ENCODE measurements at regions of chr1 and their contacts with region 1.

Region 1: DNA sequence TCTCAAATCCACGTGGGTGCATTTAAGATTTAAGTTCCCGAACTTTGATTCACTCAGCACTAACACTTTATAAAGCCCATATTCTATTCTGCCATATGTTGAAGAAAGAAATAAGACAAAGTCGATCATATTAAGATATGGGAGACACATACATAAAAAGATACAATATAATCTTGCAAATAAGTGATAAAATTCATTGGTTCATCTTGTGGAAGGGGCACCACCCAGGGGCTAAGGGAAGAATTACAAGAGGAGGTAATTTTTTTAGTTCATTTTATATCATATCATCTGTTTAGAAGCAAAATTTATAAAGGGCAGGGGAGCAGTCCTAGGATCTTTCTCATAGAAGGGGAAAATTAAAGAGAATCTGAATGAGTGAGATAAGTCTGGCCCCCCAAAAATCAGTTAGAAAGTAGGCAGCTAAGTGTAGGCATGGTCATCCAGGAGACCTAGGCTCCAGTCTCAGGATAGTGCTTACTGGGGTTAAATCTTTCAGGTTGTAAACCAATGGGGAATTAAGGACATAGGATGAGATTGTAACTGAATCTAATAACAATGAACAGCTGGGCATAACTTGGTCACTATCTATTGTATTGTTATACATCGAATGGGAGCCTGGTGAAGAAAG is 124.2 kb upstream of the L1TD1 start:
- DNase-seq: peak; percentile 47
- ATAC-seq: peak; percentile 35; the same call in 1 of the 2 replicates
- H3K4me3 ChIP-seq: no peak overlapping the region
- H3K27ac ChIP-seq: no peak overlapping the region
- H3K4me1 ChIP-seq: no peaks in the 10 kb centered on the region
- H3K27me3 ChIP-seq: no peaks in the 10 kb centered on the region
- CTCF ChIP-seq: peak; percentile 79

Region 2: GRCh38 chr1:60969971-60970509 is 1100.5 kb before region 1 on chr1:
- CTCF ChIA-PET with region 1: no interaction called
- POLR2A ChIA-PET with region 1: no interaction called
- intact Hi-C with region 1: loop called (anchors 5 kb)
- DNase-seq: peak; percentile 48
- ATAC-seq: peak; percentile 70
- H3K4me3 ChIP-seq: no peak overlapping the region
- H3K27ac ChIP-seq: no peak overlapping the region
- H3K4me1 ChIP-seq: peaks cover 11% of the 10 kb centered on the region
- H3K27me3 ChIP-seq: no peaks in the 10 kb centered on the region
- CTCF ChIP-seq: peak; percentile 69

Region 3: DNA sequence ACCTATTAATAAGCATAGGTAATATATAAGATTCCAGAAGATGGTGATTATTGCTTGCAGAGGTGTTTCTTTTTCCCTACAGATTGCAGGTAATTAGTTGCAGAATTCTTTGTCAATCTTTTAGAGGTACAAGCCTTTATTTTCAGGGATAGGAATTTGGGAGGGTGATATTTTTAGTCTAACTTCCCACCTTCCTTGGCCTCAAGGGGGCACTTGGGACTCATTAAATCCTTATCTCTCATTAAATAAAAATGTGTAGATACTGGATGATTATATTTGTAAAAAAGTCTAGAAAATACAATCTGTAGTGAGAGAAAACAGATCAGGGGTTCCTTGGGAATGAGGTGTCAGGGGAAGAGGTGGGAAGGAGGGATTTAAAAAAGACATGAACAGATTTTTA is 149.1 kb before region 1 on chr1:
- CTCF ChIA-PET with region 1: no interaction called
- POLR2A ChIA-PET with region 1: no interaction called
- intact Hi-C with region 1: loop called (anchors 1 kb)
- DNase-seq: peak; percentile 3
- ATAC-seq: no peak
- H3K4me3 ChIP-seq: no peak overlapping the region
- H3K27ac ChIP-seq: no peak overlapping the region
- H3K4me1 ChIP-seq: peaks cover 13% of the 10 kb centered on the region
- H3K27me3 ChIP-seq: no peaks in the 10 kb centered on the region
- CTCF ChIP-seq: peak; percentile 54

Region 4: GRCh38 chr1:61950418-61950817 is 120.1 kb before region 1 on chr1:
- CTCF ChIA-PET with region 1: no interaction called
- POLR2A ChIA-PET with region 1: no interaction called
- intact Hi-C with region 1: loop called (anchors 1 kb)
- DNase-seq: peak; percentile 63
- ATAC-seq: peak; percentile 64
- H3K4me3 ChIP-seq: no peak overlapping the region
- H3K27ac ChIP-seq: no peak overlapping the region
- H3K4me1 ChIP-seq: 0 out of 2 replicates have a peak, but pooled peaks cover 14% of the 10 kb centered on the region
- H3K27me3 ChIP-seq: no peaks in the 10 kb centered on the region
- CTCF ChIP-seq: peak; percentile 76